Calu3 (cell line): ENCODE measurements at regions of chr7 and their contacts with region 1.

Region 1: DNA sequence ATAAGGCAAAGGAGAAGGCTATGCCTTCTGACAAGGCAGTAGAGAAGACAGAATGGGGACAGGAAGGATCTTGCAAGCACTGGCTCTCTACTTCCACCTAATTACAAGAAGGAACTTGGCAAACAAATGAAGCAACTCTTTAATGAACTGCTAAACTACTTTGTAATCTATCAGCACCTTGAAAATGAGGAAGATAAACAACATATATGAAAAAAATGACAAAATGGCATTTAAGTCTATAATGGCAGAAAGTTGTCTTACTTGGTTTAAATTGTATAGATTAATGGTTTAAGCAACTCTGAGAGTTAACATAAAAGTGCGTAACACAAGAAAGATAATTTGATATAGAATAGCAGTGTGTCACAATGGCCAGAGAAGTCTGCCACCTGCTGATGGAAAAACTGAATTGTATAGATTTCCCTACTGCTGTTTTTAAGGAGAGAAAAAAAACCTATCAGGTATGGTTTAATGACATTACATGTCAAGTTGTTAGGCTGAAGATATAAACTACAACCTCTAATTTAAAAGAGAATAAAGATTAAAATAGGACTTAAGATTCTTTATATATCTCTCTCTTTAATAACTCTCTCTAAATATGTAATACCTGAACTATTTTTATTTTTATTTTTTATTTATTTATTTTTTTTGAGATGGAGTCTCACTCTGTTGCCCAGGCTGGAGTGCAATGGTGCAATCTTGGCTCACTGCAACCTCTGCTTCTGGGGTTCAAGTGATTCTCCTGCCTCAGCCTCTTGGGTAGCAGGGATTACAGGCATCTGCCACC is 11.8 kb downstream of the NT5C3A start:
- DNase-seq: peak; percentile 47
- H3K4me3 Mint-ChIP-seq: no peak overlapping the region
- H3K27ac Mint-ChIP-seq: no peak overlapping the region
- H3K4me1 Mint-ChIP-seq: peaks cover 17% of the 10 kb centered on the region
- H3K27me3 Mint-ChIP-seq: no peaks in the 10 kb centered on the region
- CTCF ChIP-seq: peak; percentile 68

Region 2: GRCh38 chr7:32761451-32762205 is 289.1 kb before region 1 on chr7:
- CTCF ChIA-PET with region 1: no interaction called
- intact Hi-C with region 1: loop called (anchors 10 kb)
- DNase-seq: no peak
- H3K4me3 Mint-ChIP-seq: no peak overlapping the region
- H3K27ac Mint-ChIP-seq: no peak overlapping the region
- H3K4me1 Mint-ChIP-seq: no peaks in the 10 kb centered on the region
- H3K27me3 Mint-ChIP-seq: no peaks in the 10 kb centered on the region
- CTCF ChIP-seq: no peak

Region 3: DNA sequence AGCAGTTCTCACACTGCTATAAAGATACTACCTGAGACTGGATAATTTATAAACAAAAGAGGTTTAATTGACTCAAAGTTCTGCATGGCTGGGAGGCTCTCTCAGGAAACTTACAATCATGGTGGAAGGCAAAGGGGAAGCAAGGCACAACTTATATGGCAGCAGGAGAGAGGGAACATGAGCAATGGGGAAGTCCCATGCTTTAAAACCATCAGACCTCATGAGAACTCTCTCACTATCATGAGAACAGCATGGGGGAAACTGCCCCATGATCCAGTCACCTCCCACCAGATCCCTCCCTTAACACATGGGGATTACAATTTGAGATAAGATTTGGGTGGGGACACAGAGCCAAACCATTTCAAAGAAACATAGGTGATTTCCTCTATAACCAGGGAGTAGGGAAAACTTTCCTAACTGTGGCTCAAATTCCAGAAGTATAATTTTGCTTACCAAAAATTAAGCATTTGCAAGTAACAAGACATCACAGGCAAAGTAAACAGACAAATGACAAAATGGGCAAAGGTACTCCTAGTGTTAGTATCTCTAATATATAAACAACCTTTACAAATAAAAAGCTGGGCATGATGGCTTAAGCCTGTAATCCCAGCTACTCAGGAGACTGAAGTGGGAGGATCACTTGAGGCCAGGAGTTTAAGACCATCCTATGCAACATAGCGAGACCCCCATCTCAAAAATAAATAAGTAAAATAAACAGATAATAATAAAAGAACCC is 247.2 kb before region 1 on chr7:
- CTCF ChIA-PET with region 1: interaction called, 3 read pairs
- intact Hi-C with region 1: loop called (anchors 2 kb)
- DNase-seq: no peak
- H3K4me3 Mint-ChIP-seq: no peak overlapping the region
- H3K27ac Mint-ChIP-seq: no peak overlapping the region
- H3K4me1 Mint-ChIP-seq: no peaks in the 10 kb centered on the region
- H3K27me3 Mint-ChIP-seq: no peaks in the 10 kb centered on the region
- CTCF ChIP-seq: no peak

Region 4: DNA sequence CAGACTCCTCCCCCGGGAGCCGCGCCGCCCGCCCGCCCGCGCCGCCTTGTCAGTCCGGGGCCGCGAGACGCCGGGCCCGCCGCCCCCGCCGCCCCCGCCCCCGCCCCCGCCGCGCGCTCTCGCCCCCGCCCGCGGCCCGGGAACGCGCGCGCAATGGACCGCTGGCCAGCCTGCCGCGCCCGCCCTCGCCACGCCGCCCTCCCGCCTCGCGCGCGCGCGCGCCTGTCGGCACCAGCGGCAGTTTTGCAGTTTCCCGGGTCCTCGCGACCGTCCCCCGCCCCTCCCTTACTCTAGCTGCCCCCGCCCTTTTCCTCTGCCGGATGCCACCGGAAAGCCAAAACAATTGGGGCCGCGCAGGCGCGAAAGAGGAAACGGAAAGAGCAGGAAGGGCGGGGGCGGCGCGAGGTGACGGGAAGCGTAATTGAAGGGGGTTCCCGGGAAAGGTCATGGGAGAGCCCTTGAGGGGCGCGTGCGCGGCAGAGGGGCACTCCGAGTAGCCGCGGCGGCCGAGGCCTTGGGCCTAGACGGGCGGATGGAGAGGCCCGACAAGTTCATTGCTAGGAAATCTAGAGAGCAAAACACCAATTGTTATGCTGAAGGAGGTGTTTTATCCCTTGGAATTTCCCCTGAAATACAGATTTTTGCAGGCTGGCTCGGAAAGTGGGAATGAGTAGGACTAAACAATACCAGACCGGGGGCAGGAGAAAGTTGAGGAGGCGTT is 158.8 kb before region 1 on chr7:
- CTCF ChIA-PET with region 1: no interaction called
- intact Hi-C with region 1: loop called (anchors 1 kb)
- DNase-seq: peak; percentile 98
- H3K4me3 Mint-ChIP-seq: peak overlapping the region; percentile 89
- H3K27ac Mint-ChIP-seq: peak overlapping the region; percentile 88
- H3K4me1 Mint-ChIP-seq: peaks cover 51% of the 10 kb centered on the region
- H3K27me3 Mint-ChIP-seq: peaks cover 7% of the 10 kb centered on the region
- CTCF ChIP-seq: no peak

Region 5: DNA sequence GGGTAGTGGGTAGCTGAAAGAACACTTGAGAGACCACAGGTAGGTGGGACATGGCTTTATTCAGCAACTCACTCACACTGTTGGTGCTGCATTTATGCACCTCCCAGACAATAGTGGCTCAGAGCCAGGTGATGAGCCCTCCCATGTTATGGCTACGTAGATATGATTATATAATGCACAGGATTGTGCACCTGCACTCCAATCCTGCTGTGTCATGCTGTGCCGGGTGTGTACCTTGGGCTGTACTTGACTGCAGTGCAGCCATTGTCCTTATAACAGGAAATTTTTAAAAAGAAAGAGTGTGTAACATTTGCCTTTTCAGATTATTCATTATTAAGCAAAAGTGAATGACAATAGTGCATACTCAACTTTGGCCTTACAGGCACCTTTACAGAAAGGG is 488.5 kb after region 1 on chr7:
- CTCF ChIA-PET with region 1: no interaction called
- intact Hi-C with region 1: no loop called
- DNase-seq: no peak
- H3K4me3 Mint-ChIP-seq: no peak overlapping the region
- H3K27ac Mint-ChIP-seq: no peak overlapping the region
- H3K4me1 Mint-ChIP-seq: no peaks in the 10 kb centered on the region
- H3K27me3 Mint-ChIP-seq: no peaks in the 10 kb centered on the region
- CTCF ChIP-seq: no peak

Region 6: DNA sequence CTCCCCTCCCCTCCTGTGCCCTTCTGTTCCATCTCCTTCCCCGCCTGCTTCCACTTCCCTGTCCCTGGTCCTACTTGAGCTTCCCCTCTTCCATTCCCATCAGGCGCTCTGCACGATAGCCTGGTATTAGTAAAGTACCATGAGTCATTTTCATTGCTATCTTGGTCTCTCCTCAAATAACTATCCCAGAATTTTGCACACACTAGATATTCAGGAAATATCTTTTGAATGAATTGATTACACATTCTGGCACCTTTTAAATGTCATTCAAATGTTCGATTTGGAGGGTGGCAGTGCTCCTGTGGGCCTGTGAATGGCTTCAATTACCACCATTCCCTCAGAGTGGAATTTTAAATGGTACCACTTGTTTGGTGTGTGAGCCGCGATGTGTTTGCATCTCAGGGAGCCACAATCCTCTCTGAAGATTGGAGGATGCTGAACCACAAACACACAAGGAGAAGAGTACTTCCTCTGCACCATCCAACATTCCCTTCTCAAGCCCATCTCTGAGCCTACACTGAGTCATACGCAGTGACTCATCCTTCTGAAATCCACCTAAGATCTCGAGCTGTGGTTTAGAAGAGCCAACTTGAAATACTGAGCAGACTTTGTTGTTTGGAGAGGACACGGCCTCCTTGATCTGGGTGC is 936.3 kb after region 1 on chr7:
- CTCF ChIA-PET with region 1: no interaction called
- intact Hi-C with region 1: no loop called
- DNase-seq: peak; percentile 75
- H3K4me3 Mint-ChIP-seq: no peak overlapping the region
- H3K27ac Mint-ChIP-seq: peak overlapping the region; percentile 32
- H3K4me1 Mint-ChIP-seq: peaks cover 23% of the 10 kb centered on the region
- H3K27me3 Mint-ChIP-seq: peaks cover under 1% of the 10 kb centered on the region
- CTCF ChIP-seq: no peak